Mammary epithelial cell (primary cell): ENCODE measurements at regions of chr13 and their contacts with region 1.

Region 1: GRCh38 chr13:62357887-62358645 is 942.4 kb upstream of the PCDH20 start:
- DNase-seq: no peak
- H3K4me3 ChIP-seq: no peak overlapping the region
- H3K27ac ChIP-seq: no peak overlapping the region
- H3K4me1 ChIP-seq: no peaks in the 10 kb centered on the region
- H3K27me3 ChIP-seq: no peaks in the 10 kb centered on the region
- CTCF ChIP-seq: peak; percentile 55 to 75

Region 2: GRCh38 chr13:61880578-61881283 is 477.3 kb before region 1 on chr13:
- CTCF ChIA-PET with region 1: no interaction called
- dilution Hi-C with region 1: no loop called
- in situ Hi-C with region 1: no loop called
- intact Hi-C with region 1: loop called (anchors 5 kb)
- DNase-seq: no peak
- H3K4me3 ChIP-seq: no peak overlapping the region
- H3K27ac ChIP-seq: no peak overlapping the region
- H3K4me1 ChIP-seq: no peaks in the 10 kb centered on the region
- H3K27me3 ChIP-seq: no peaks in the 10 kb centered on the region
- CTCF ChIP-seq: peak; percentile 59 to 74

Region 3: DNA sequence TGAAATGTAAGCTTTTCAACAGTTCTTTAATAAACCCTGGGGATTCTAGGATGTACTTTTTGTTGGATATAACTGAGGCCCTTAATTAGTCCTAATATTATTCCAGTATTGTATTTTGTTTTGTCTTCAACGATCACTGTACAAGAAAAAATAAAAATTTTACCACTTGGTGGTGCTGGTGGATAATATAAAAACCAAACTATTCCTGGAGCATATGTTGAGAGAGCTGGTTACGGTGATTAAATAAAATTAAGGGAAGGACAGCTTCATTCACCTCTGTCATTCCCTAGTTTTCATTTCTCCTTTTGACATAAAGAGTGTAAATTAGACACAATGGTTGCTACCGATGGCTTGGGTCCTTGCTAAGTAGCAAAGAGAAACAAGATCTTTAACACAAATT is 343.8 kb before region 1 on chr13:
- CTCF ChIA-PET with region 1: no interaction called
- dilution Hi-C with region 1: no loop called
- in situ Hi-C with region 1: no loop called
- intact Hi-C with region 1: loop called (anchors 5 kb)
- DNase-seq: no peak
- H3K4me3 ChIP-seq: no peak overlapping the region
- H3K27ac ChIP-seq: no peak overlapping the region
- H3K4me1 ChIP-seq: no peaks in the 10 kb centered on the region
- H3K27me3 ChIP-seq: peaks cover 2% of the 10 kb centered on the region
- CTCF ChIP-seq: peak in 1 of 2 donors; percentile 20

Region 4: GRCh38 chr13:62119739-62120700 is 238.0 kb before region 1 on chr13:
- CTCF ChIA-PET with region 1: interaction called, 4 read pairs
- dilution Hi-C with region 1: no loop called
- in situ Hi-C with region 1: loop called in 1 of 2 experiments (anchors 25 kb)
- intact Hi-C with region 1: loop called (anchors 1 kb)
- DNase-seq: no peak
- H3K4me3 ChIP-seq: no peak overlapping the region
- H3K27ac ChIP-seq: no peak overlapping the region
- H3K4me1 ChIP-seq: no peaks in the 10 kb centered on the region
- H3K27me3 ChIP-seq: no peaks in the 10 kb centered on the region
- CTCF ChIP-seq: peak; percentile 26 to 36

Region 5: DNA sequence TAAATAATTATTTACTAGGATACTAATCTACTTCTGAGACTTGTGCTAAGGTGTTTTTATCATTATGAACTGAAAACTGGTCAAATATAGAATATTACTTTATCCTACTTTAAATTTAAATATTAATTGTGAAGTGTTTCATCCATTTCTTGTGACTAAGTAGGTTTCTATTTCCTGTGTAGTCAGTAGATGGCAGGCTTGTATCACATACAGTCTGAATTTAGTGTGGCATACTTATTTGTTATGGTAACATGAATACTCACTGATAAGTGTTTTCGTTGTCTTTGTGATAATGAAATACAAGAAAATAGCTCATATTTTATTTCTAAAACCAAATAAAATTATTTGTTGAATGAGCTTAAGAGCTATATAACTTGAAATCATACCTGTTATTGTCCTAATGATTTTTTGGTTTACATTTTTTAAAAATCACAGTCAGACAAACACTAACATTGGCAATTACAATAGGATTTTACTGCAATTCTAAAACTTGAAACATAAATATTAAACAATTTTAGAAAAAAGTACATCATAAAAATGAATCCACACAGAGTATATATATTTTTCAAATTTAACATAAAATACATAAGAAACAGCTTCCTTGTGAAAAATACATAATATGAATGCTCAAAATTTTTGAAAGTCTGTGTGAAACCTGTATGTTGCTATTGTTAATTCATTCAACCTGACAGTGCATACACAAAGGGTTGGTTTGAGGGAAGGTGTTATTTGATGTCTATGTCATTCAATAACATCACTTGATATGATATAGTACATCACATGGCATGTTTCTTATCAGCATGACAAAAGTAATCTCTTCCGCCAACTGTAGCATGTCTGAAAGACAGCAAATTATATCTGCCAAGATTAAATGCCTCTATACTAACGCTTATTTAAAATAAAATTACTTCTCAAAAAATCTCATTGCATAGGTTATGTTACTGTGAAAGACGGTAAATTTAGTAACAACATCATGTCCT is 37.6 kb before region 1 on chr13:
- CTCF ChIA-PET with region 1: no interaction called
- dilution Hi-C with region 1: no loop called
- in situ Hi-C with region 1: no loop called
- intact Hi-C with region 1: loop called (anchors 1 kb)
- DNase-seq: peak; percentile 0
- H3K4me3 ChIP-seq: no peak overlapping the region
- H3K27ac ChIP-seq: no peak overlapping the region
- H3K4me1 ChIP-seq: no peaks in the 10 kb centered on the region
- H3K27me3 ChIP-seq: no peaks in the 10 kb centered on the region
- CTCF ChIP-seq: peak; percentile 31 to 66

Region 6: DNA sequence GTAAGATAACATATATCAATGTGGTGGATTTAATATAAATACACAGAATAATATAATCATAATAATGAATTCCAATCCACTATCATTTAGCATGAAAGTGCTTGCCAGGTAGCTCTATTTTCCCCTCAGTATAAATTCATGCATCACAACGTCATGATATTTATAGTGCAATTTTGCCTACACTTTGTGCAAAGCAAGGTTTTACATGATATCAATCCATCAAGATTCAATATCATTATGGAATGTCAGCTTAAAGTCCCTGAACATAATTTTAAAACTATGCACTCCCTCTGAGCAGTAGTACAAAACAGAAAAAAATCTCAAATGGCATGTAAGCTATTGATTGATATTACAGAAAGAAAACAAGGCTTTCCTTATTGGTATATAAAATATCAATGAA is 19.8 kb after region 1 on chr13:
- CTCF ChIA-PET with region 1: no interaction called
- dilution Hi-C with region 1: no loop called
- in situ Hi-C with region 1: no loop called
- intact Hi-C with region 1: no loop called
- DNase-seq: no peak
- H3K4me3 ChIP-seq: no peak overlapping the region
- H3K27ac ChIP-seq: no peak overlapping the region
- H3K4me1 ChIP-seq: no peaks in the 10 kb centered on the region
- H3K27me3 ChIP-seq: no peaks in the 10 kb centered on the region
- CTCF ChIP-seq: no peak

Region 7: GRCh38 chr13:62418872-62419271 is 60.8 kb after region 1 on chr13:
- CTCF ChIA-PET with region 1: no interaction called
- dilution Hi-C with region 1: no loop called
- in situ Hi-C with region 1: no loop called
- intact Hi-C with region 1: no loop called
- DNase-seq: no peak
- H3K4me3 ChIP-seq: no peak overlapping the region
- H3K27ac ChIP-seq: no peak overlapping the region
- H3K4me1 ChIP-seq: no peaks in the 10 kb centered on the region
- H3K27me3 ChIP-seq: no peaks in the 10 kb centered on the region
- CTCF ChIP-seq: no peak

Region 8: DNA sequence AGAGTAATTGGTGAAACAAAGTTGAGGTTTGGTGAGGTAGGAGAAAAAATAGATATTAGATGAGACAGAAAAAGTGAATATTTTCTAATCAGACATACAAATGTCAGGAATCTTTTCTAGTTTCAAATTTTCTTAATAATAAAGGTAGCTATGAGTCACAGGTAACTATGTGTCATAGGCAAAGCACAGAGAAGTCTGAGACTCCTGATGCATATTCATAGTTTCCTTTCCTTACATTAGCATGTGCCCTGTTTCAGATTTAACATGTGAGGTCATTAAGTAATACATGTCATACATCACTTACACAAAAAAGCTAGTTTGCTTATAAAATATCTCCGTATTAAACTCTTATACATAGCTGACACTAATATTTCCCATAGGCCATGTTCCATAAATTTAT is 198.9 kb after region 1 on chr13:
- CTCF ChIA-PET with region 1: no interaction called
- dilution Hi-C with region 1: no loop called
- in situ Hi-C with region 1: no loop called
- intact Hi-C with region 1: no loop called
- DNase-seq: no peak
- H3K4me3 ChIP-seq: no peak overlapping the region
- H3K27ac ChIP-seq: no peak overlapping the region
- H3K4me1 ChIP-seq: no peaks in the 10 kb centered on the region
- H3K27me3 ChIP-seq: no peaks in the 10 kb centered on the region
- CTCF ChIP-seq: no peak